Right cardiac atrium (tissue), 5 donors: ENCODE measurements at regions of chr3 and their contacts with region 1.

Region 1: DNA sequence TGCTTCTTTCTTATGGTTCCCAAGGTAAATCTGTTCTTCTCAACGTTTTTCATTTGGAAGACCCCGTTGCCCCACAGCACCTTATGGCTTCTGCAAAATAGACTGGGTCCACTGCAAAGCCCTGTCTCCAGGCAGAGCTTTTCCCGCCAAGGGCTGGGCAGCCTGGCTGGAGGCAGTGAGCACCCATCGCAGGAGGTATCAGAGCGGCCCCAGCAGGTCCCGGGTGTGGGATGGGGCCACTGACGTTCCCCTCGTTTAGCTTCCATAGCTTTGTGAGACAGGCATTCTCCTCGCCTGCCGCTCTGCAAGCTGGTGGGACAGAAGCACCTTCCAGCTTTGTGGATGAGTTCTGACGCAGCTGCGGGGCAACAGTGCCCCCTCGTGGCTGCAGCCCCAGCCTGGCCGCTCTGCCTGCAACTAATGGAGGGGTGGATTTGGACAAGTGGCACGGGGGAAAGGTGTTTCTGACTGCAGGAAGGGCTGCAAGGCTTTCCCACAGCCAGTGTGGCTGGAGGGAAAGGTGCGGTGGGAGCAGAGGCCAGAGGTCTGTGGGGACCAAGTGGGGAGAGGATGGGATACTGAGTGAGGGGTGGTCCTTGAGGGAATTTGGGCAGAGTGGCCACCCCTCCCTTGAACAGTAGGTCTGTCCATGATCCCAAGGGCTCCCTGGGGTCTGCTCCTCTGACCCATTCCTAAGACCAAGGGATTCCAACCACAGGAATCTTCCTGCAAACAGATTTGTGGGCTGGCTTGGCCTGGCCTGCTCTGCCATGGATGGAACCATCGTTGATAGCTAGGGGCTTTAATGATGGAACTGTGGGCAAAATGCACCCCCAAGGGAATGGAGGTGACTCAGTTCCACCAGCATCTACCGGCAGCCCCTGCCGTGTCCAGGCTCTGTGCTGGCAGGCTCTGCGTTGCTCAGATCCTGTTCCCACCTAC is 99.4 kb downstream of the FBLN2 start:
- DNase-seq: peak; percentile 81 to 96 (median 93)
- ATAC-seq: peak; percentile 71 to 79
- H3K4me3 ChIP-seq: no peak overlapping the region
- H3K27ac ChIP-seq: no peak overlapping the region
- H3K4me1 ChIP-seq: no peaks in the 10 kb centered on the region
- H3K27me3 ChIP-seq: no peaks in the 10 kb centered on the region

Region 2: GRCh38 chr3:13091898-13092611 is 556.3 kb before region 1 on chr3:
- intact Hi-C with region 1: loop called (anchors 5 to 10 kb)
- DNase-seq: peak; percentile 85 to 95 (median 93)
- ATAC-seq: peak; percentile 84 to 86
- H3K4me3 ChIP-seq: no peak overlapping the region
- H3K27ac ChIP-seq: no peak overlapping the region
- H3K4me1 ChIP-seq: no peaks in the 10 kb centered on the region
- H3K27me3 ChIP-seq: no peaks in the 10 kb centered on the region

Region 3: GRCh38 chr3:13495921-13496723 is 152.2 kb before region 1 on chr3:
- intact Hi-C with region 1: loop called (anchors 1 to 2 kb)
- DNase-seq: peak; percentile 78 to 93 (median 87)
- ATAC-seq: peak; percentile 86 to 88
- H3K4me3 ChIP-seq: no peak overlapping the region
- H3K27ac ChIP-seq: peak overlapping the region; percentile 13
- H3K4me1 ChIP-seq: peaks cover 2% of the 10 kb centered on the region
- H3K27me3 ChIP-seq: no peaks in the 10 kb centered on the region

Region 4: DNA sequence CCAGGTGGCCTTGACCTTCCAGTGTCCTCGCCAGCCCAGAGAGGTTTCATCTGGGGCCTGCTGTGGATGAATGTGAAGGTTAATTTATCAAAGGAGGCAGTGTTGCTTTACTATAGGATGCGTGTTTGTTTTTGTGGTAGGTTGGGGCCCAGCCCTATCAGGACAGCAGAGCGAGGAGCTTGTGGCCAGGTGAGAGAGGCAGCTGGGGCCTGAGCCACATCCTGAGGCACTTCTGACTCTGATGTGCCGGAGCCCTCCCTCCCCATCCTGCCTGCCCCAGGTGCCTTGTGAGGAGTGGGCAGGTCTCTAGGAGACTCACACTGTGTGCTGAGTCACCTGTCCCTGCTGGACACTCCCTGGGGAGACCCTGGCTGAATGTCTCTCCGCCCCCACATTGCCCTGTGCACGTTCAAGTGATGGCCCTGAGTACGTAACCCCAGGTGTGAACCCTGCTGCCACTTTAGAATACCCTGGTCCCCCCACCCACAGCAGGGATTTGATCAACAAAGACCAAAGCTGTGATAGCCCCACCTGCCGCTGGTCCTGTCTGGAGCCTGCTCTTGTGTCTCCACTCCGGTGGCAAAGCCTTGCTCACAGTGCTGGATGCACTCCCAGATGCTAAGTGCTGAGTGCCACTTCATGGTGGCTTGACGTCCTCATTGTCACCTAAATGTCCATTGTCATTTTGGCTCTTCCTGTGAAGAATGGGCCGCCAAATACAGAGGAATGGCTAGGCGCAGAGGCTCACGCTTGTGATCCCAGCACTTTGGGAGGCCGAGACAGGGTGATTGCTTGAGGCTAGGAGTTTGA is 83.4 kb before region 1 on chr3:
- intact Hi-C with region 1: no loop called
- DNase-seq: peak in 1 of 3 donors; percentile 76
- ATAC-seq: peak; percentile 52 to 65
- H3K4me3 ChIP-seq: no peak overlapping the region
- H3K27ac ChIP-seq: peak overlapping the region; percentile 22
- H3K4me1 ChIP-seq: peaks cover 18% of the 10 kb centered on the region
- H3K27me3 ChIP-seq: no peaks in the 10 kb centered on the region

Region 5: DNA sequence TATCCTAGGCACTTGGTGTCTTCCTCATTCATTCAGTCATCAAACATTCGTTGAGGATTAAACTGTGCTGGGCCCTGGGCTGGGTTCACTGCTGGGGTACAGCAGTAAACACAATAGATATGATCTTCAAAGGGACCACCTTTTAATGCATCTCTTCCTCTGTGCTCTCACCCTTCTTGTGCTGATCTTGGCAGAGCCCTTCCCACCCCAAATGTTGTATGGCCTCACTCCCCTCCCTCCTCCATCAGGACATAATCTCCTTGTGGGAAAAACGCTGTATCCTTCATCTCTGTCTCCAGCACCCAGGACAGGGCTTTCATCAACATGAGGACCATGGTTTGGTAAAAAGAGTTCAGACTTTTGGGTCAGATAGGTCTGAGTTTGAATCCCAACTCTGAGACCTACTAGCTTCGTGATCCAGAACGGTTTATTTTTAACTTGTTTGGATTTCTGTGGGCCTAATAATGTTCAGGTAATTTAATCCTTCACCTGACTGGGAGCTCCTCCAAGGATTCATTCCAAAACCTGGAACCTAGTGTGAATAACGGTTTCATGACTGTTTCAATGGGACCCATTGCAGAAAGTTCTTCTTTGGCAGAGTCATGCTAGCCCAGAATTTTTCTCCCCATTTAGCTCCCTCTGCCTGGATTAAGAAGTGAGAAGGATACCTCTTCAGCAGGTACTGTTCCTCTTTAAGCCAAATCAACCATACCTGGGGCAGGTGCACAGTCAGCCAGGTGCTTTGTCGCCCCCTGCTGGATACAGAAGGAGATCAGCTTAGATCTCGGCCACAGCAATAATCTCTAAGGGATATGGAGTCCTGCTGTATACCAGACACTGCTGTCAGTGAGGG is 236.7 kb after region 1 on chr3:
- intact Hi-C with region 1: loop called in 1 of 4 experiments (anchors 10 kb)
- DNase-seq: no peak
- ATAC-seq: no peak
- H3K4me3 ChIP-seq: no peak overlapping the region
- H3K27ac ChIP-seq: no peak overlapping the region
- H3K4me1 ChIP-seq: no peaks in the 10 kb centered on the region
- H3K27me3 ChIP-seq: no peaks in the 10 kb centered on the region